Left lung (tissue), 14 donors: ENCODE measurements at regions of chr22 and their contacts with region 1.

Region 1: GRCh38 chr22:41822317-41823060 is 10.4 kb upstream of the SREBF2 start:
- DNase-seq: no peak
- ATAC-seq: peak; percentile 71
- H3K4me3 ChIP-seq: no peak overlapping the region
- H3K27ac ChIP-seq: no peak overlapping the region
- H3K4me1 ChIP-seq: peaks cover 9 to 13% of the 10 kb centered on the region in 2 donors
- H3K27me3 ChIP-seq: no peaks in the 10 kb centered on the region
- CTCF ChIP-seq: peak; percentile 31 to 36

Region 2: DNA sequence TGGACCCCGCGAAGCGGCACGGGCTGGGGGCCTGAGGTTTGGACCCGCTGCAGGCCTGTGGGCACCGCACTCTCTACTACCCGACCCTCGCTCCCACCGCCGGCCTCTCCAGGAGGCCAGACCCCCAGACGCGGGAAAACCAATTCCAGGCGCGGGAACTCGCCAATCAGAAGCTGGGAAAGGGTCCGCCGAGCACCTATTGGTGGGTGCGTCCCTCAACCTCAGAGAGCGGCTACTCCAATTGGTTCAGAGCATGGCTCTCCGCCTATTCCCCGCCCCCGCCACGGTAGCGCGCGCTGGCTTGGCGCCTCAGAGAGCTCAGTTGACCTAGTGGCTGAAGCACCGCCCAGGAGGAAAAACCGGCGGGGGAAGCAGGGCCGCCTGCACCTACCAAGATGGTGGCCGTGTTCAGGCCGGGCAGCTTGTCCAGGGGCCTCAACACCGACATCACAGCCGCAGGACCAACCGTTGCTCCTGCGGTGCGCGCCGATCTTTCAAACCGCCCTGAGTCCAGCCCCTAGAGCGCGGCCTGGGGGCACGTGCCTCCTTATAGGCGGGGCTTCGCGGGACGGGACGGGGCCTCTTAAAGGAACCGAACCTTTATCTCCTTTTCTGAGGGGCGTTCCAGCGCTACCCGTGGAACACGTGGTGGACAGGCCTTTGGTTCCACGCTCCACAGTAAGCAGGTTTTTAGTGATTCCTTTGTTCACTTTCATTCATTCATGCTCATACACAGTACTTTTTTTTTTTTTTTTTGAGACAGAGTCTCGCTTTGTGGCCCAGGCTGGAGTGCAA is 124.3 kb after region 1 on chr22 and contains the start of gene CENPM:
- intact Hi-C with region 1: loop called in 1 of 2 experiments (anchors 10 kb)
- DNase-seq: peak; percentile 91 to 97 (median 92)
- ATAC-seq: peak; percentile 98
- H3K4me3 ChIP-seq: peak within 1 kb of the TSS; percentile 67 to 90
- H3K27ac ChIP-seq: peak within 1 kb of the TSS in 1 of 2 donors; percentile 24
- H3K4me1 ChIP-seq: peaks cover 0 to 17% of the 10 kb centered on the region in 2 donors
- H3K27me3 ChIP-seq: no peaks in the 10 kb centered on the region
- CTCF ChIP-seq: no peak
- polyA plus RNA-seq, gene CENPM: 10.4 to 20.5 (median 15.7) TPM